Body of pancreas (tissue), 4 donors: ENCODE measurements at regions of chr2 and their contacts with region 1.

Region 1: DNA sequence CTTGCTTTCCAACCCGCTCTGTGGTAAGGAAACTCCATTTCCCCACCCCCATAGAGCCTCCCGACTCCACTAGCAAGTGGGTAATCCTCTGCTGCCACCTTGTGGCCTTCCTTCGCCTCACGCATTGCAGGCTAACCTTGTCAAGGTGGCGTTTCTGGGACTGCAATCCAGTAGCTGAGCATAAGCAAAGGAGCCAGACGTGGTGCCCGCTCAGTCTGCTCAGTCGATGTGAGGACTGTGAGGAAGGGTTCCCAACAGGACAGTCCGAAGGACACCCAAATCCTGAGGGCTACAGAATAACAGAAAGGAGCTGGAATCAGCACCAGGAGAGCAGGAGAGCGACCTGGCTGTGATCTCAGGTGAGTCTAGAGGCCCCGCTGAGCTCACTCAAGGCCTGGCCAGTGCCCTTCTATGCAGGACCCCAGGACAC is 144.2 kb downstream of the SUCLG1 start:
- DNase-seq: peak; percentile 89 to 95 (median 90)
- ATAC-seq: peak; percentile 96
- H3K4me3 ChIP-seq: no peak overlapping the region
- H3K27ac ChIP-seq: no peak overlapping the region
- H3K4me1 ChIP-seq: peaks cover 7% of the 10 kb centered on the region
- H3K27me3 ChIP-seq: no peaks in the 10 kb centered on the region
- CTCF ChIP-seq: peak; percentile 87 to 96 (median 93)
- POLR2A ChIP-seq: no peak

Region 2: GRCh38 chr2:84022810-84023431 is 292.0 kb before region 1 on chr2:
- intact Hi-C with region 1: loop called (anchors 10 kb)
- DNase-seq: peak; percentile 17 to 55 (median 32)
- ATAC-seq: no peak
- H3K4me3 ChIP-seq: no peak overlapping the region
- H3K27ac ChIP-seq: no peak overlapping the region
- H3K4me1 ChIP-seq: no peaks in the 10 kb centered on the region
- H3K27me3 ChIP-seq: no peaks in the 10 kb centered on the region
- CTCF ChIP-seq: peak in 6 of 7 experiments; percentile 47 to 63 (median 54)
- POLR2A ChIP-seq: no peak

Region 3: DNA sequence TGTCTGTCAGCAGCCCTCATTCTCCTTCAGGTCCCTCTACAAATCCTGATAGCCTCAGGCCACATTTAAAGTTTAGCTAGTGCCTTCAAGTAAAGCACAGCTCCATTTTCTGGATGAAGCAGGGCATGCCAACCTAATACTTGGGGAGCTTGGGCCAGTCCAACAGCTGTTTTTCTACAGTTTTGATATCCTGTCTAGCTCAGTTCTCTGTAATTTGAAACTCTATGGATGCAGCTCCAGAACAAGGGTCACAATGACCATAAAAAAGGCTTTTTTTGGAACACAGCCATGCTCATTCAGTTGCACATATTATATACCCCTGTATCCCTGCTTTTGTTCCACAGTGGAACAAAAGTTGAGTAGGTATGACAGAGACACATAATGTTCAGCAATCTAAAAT is 229.4 kb before region 1 on chr2:
- intact Hi-C with region 1: no loop called
- DNase-seq: no peak
- ATAC-seq: no peak
- H3K4me3 ChIP-seq: no peak overlapping the region
- H3K27ac ChIP-seq: no peak overlapping the region
- H3K4me1 ChIP-seq: no peaks in the 10 kb centered on the region
- H3K27me3 ChIP-seq: no peaks in the 10 kb centered on the region
- CTCF ChIP-seq: no peak
- POLR2A ChIP-seq: no peak

Region 4: GRCh38 chr2:84187258-84187657 is 127.7 kb before region 1 on chr2:
- intact Hi-C with region 1: no loop called
- DNase-seq: no peak
- ATAC-seq: no peak
- H3K4me3 ChIP-seq: no peak overlapping the region
- H3K27ac ChIP-seq: no peak overlapping the region
- H3K4me1 ChIP-seq: no peaks in the 10 kb centered on the region
- H3K27me3 ChIP-seq: no peaks in the 10 kb centered on the region
- CTCF ChIP-seq: no peak
- POLR2A ChIP-seq: no peak

Region 5: GRCh38 chr2:84276585-84277255 is 38.2 kb before region 1 on chr2:
- intact Hi-C with region 1: no loop called
- DNase-seq: no peak
- ATAC-seq: no peak
- H3K4me3 ChIP-seq: no peak overlapping the region
- H3K27ac ChIP-seq: no peak overlapping the region
- H3K4me1 ChIP-seq: peaks cover 13% of the 10 kb centered on the region
- H3K27me3 ChIP-seq: no peaks in the 10 kb centered on the region
- CTCF ChIP-seq: no peak
- POLR2A ChIP-seq: no peak